Activated CD4-positive, alpha-beta T cell treated with anti-CD3 and anti-CD28 coated beads for 36 hours (primary cell): ENCODE measurements at regions of chr11 and their contacts with region 1.

Region 1: GRCh38 chr11:86740709-86741483 is 59.4 kb upstream of the PRSS23 start:
- DNase-seq: peak; percentile 60
- ATAC-seq: peak; percentile 52
- H3K4me3 Mint-ChIP-seq: no peak overlapping the region
- H3K27ac Mint-ChIP-seq: peak overlapping the region; percentile 62
- H3K4me1 Mint-ChIP-seq: peaks cover 30% of the 10 kb centered on the region
- H3K27me3 Mint-ChIP-seq: peaks cover 14% of the 10 kb centered on the region

Region 2: GRCh38 chr11:86483940-86484794 is 256.7 kb before region 1 on chr11:
- CTCF ChIA-PET with region 1: no interaction called
- POLR2A ChIA-PET with region 1: no interaction called
- intact Hi-C with region 1: no loop called
- DNase-seq: no peak
- ATAC-seq: no peak
- H3K4me3 Mint-ChIP-seq: no peak overlapping the region
- H3K27ac Mint-ChIP-seq: no peak overlapping the region
- H3K4me1 Mint-ChIP-seq: no peaks in the 10 kb centered on the region
- H3K27me3 Mint-ChIP-seq: no peaks in the 10 kb centered on the region

Region 3: DNA sequence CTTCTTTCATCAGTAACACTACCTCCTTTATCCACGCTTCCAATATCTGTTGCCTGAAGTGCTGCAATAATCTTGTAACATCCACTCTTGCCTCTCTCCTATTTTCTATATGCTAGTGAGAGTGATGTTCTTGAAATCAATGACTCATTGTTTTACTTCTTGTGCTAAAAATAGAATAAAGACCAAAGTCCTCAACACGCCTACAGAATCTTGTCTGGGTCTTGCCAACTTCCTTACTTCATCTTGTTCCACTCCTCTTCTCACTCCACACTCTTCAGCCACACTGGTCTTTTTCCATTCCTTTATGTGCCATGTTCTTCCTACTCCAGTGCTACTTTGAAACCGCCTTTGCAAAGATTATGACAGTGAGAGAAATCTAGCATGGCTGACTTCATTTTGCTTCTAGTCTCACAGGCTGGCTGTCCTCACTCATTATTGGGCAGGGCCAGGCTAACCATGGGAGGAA is 229.8 kb before region 1 on chr11:
- CTCF ChIA-PET with region 1: no interaction called
- POLR2A ChIA-PET with region 1: no interaction called
- intact Hi-C with region 1: loop called in 1 of 2 experiments (anchors 1 kb)
- DNase-seq: peak; percentile 14
- ATAC-seq: peak; percentile 82
- H3K4me3 Mint-ChIP-seq: no peak overlapping the region
- H3K27ac Mint-ChIP-seq: no peak overlapping the region
- H3K4me1 Mint-ChIP-seq: no peaks in the 10 kb centered on the region
- H3K27me3 Mint-ChIP-seq: no peaks in the 10 kb centered on the region

Region 4: DNA sequence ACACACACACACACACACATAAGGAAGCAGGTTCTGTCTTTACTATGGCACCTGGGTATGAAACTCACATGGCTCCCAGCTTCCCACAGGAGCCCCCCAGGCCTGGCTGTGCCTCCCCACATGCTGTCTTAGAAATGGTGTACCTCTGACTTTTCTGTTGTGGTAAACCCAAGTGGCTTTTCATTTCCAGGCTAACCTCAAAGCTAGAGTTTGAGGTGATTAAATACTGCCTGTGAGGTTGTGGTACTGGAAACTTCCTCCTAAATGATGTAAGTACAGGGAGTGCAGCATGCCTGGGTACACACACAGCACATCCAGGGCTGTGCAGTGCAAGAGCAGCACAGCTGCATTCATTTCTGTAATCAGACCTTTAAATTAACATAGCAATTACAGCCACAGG is 102.9 kb before region 1 on chr11:
- CTCF ChIA-PET with region 1: no interaction called
- POLR2A ChIA-PET with region 1: no interaction called
- intact Hi-C with region 1: loop called in 1 of 2 experiments (anchors 5 kb)
- DNase-seq: peak; percentile 32
- ATAC-seq: peak; percentile 86
- H3K4me3 Mint-ChIP-seq: no peak overlapping the region
- H3K27ac Mint-ChIP-seq: no peak overlapping the region
- H3K4me1 Mint-ChIP-seq: peaks cover 37% of the 10 kb centered on the region
- H3K27me3 Mint-ChIP-seq: peaks cover 2% of the 10 kb centered on the region

Region 5: GRCh38 chr11:86688398-86689179 is 52.3 kb before region 1 on chr11:
- CTCF ChIA-PET with region 1: interaction called, 3 read pairs
- POLR2A ChIA-PET with region 1: no interaction called
- intact Hi-C with region 1: loop called (anchors 1 to 2 kb)
- DNase-seq: peak; percentile 69
- ATAC-seq: peak; percentile 87
- H3K4me3 Mint-ChIP-seq: peak overlapping the region; percentile 16
- H3K27ac Mint-ChIP-seq: peak overlapping the region; percentile 92
- H3K4me1 Mint-ChIP-seq: peaks cover 28% of the 10 kb centered on the region
- H3K27me3 Mint-ChIP-seq: peaks cover 7% of the 10 kb centered on the region

Region 6: GRCh38 chr11:86802601-86803051 is 61.7 kb after region 1 on chr11:
- CTCF ChIA-PET with region 1: no interaction called
- POLR2A ChIA-PET with region 1: interaction called, 4 read pairs
- intact Hi-C with region 1: loop called (anchors 1 to 2 kb)
- DNase-seq: peak; percentile 39
- ATAC-seq: peak; percentile 34
- H3K4me3 Mint-ChIP-seq: no peak overlapping the region
- H3K27ac Mint-ChIP-seq: no peak overlapping the region
- H3K4me1 Mint-ChIP-seq: peaks cover 62% of the 10 kb centered on the region
- H3K27me3 Mint-ChIP-seq: peaks cover 55% of the 10 kb centered on the region